ENCODE measurements at regions of chr1 and their contacts with region 1.

Region 1: GRCh38 chr1:114716304-114717170 is at the start of gene NRAS:
- DNase-seq: peak; percentile 96
- H3K4me3 Mint-ChIP-seq: peak within 1 kb of the TSS; percentile 97
- H3K27ac Mint-ChIP-seq: peak within 1 kb of the TSS; percentile 98
- H3K4me1 Mint-ChIP-seq: peaks cover 26% of the 10 kb centered on the region
- H3K27me3 Mint-ChIP-seq: no peaks in the 10 kb centered on the region
- total RNA-seq, gene NRAS: 53.4 to 54.1 TPM

Region 2: DNA sequence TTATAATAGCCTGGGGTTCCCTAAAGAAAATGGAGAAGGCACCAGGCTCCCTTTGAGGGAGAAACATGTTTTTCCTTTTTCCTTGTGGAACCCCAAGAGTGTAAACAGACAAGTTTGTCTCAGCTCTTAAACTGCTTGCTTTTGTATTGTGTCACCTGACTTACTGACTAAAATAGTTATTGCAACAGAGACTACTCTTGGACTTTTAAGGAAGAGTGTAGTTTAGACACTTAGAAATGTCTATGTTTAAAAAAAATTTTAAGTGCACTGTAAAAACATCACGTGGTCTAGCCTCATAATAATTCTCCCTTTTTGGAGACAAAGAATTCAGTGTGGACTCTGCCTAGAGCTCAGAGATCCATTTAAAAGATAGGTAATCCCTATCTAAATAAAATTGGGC is 346.6 kb before region 1 on chr1:
- CTCF ChIA-PET with region 1: no interaction called
- POLR2A ChIA-PET with region 1: no interaction called
- DNase-seq: no peak
- H3K4me3 Mint-ChIP-seq: no peak overlapping the region
- H3K27ac Mint-ChIP-seq: no peak overlapping the region
- H3K4me1 Mint-ChIP-seq: no peaks in the 10 kb centered on the region
- H3K27me3 Mint-ChIP-seq: peaks cover 3% of the 10 kb centered on the region

Region 3: DNA sequence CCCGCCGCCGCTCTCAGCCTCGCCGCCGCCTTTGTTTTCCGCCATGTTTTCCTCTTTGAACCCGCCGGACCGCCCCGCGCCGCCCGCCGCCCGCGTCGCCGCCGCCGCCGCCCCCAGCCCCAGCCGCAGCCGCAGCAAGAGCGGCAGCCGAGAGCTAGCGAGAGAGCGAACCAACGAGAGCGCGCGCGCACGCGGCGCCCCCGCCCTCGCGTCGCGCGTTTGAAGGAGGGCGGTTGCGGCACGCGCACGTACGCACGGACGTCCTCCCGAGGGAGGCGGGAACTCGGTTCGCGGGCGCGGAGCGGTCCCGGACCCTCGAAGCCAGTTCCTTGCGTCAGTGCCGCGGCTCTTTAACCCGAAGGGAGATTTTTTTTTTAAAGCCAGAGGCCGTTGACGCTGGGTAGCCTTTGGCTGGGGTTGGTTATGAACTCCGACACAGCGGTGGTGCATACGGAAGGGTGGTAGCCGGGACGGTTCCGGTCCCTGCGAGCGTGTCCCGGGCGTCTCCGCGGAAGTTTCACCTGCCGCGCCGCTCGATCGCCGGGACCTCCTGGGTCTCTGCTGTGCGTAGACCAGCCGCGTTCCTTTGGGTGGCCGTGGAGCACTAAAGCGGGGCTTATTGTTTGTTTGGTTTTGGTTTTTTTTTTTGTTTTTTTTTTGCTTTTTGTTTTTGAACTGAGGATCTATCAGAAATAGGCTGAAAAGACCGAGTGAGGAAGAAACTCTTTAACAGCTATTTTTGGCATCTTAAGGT is 205.3 kb before region 1 on chr1 and contains the start of gene TRIM33:
- CTCF ChIA-PET with region 1: no interaction called
- POLR2A ChIA-PET with region 1: interaction called, 17 read pairs
- DNase-seq: peak; percentile 92
- H3K4me3 Mint-ChIP-seq: peak within 1 kb of the TSS; percentile 93
- H3K27ac Mint-ChIP-seq: peak within 1 kb of the TSS; percentile 98
- H3K4me1 Mint-ChIP-seq: peaks cover 47% of the 10 kb centered on the region
- H3K27me3 Mint-ChIP-seq: no peaks in the 10 kb centered on the region
- total RNA-seq, gene TRIM33: 36.0 to 36.5 TPM

Region 4: GRCh38 chr1:114581335-114582287 is 134.9 kb before region 1 on chr1 and contains the start of gene BCAS2:
- CTCF ChIA-PET with region 1: interaction called, 4 read pairs
- POLR2A ChIA-PET with region 1: interaction called, 10 read pairs
- DNase-seq: peak; percentile 98
- H3K4me3 Mint-ChIP-seq: peak within 1 kb of the TSS; percentile 100
- H3K27ac Mint-ChIP-seq: peak within 1 kb of the TSS; percentile 94
- H3K4me1 Mint-ChIP-seq: peaks cover 40% of the 10 kb centered on the region
- H3K27me3 Mint-ChIP-seq: no peaks in the 10 kb centered on the region
- total RNA-seq, gene BCAS2: 45.0 to 45.5 TPM

Region 5: GRCh38 chr1:114780344-114781226 is 64.0 kb after region 1 on chr1 and contains the start of gene SIKE1:
- CTCF ChIA-PET with region 1: interaction called, 5 read pairs
- POLR2A ChIA-PET with region 1: interaction called, 24 read pairs
- DNase-seq: peak; percentile 96
- H3K4me3 Mint-ChIP-seq: peak within 1 kb of the TSS; percentile 98
- H3K27ac Mint-ChIP-seq: peak within 1 kb of the TSS; percentile 95
- H3K4me1 Mint-ChIP-seq: peaks cover 30% of the 10 kb centered on the region
- H3K27me3 Mint-ChIP-seq: peaks cover 11% of the 10 kb centered on the region
- total RNA-seq, gene SIKE1: 59.4 to 68.5 TPM